ENCODE measurements at regions of chr4 and their contacts with region 1.

Region 1: DNA sequence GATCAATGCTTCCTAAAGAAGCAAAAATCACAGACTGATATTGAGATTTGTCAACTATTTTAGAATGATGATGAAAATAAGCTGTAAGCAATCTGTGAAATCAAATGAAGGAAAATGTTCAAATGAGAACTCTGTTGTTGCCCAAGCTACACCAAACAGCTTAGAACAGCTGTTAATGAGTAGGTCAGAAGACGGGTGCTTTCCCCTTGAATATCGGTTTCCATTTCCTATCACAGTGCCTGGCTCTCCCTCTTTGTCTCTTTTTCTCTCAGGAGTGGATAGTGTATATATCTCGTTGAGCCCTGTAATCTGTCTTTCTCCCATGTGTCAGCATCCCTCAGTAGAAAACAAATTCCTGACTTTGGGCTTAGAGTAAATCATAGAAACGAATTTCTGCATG is 1592.9 kb upstream of the TENM3 start:
- DNase-seq: no peak

Region 2: GRCh38 chr4:180860089-180860720 is 209.9 kb after region 1 on chr4:
- intact Hi-C with region 1: no loop called
- DNase-seq: peak in 1 of 10 donors; percentile 55

Region 3: DNA sequence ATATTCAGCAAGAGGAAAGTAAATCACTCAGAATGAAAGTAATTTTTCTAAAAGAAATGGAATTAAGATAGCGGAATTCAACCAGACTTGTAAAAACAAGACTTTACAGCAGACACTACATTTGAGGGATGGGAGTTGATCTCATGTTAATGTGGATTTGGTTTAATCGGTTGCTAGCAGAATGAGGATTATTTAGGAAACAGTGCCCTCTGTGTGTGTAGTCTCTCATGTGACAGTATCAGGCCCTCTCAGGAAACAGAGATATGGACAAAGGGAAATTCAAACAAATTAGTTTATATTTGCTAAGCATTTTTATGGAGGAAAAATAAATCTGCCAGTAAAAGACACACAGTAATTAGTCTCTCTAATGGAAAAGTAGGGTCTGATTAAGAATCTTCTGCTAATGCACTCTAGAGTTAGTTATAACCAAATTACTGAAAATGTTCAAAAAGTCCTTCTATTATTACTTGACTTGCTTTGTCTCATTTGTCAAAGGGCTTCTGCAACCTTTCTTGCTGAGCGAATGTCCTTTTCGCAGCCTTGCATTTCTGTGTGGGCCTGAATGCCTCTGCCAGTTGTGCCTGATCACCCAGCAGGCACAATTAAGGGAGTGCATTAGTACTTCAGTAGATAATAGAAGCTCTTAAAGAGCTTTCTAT is 310.6 kb after region 1 on chr4:
- intact Hi-C with region 1: loop called (anchors 10 kb)
- DNase-seq: no peak

Measured in posterior cingulate gyrus (tissue), 11 donors.